Activated T-helper 2 cell treated with anti-CD3 and anti-CD28 coated beads, Interferon-gamma antibody, Interleukin-2, Interleukin-4, amounts not matched to agents 10 μg/mL and 5 μg/mL and 100 μg/mL, durations not matched to agents 14 hours and 24 hours and 36 hours (primary cell): ENCODE measurements at regions of chr1 and their contacts with region 1.

Region 1: DNA sequence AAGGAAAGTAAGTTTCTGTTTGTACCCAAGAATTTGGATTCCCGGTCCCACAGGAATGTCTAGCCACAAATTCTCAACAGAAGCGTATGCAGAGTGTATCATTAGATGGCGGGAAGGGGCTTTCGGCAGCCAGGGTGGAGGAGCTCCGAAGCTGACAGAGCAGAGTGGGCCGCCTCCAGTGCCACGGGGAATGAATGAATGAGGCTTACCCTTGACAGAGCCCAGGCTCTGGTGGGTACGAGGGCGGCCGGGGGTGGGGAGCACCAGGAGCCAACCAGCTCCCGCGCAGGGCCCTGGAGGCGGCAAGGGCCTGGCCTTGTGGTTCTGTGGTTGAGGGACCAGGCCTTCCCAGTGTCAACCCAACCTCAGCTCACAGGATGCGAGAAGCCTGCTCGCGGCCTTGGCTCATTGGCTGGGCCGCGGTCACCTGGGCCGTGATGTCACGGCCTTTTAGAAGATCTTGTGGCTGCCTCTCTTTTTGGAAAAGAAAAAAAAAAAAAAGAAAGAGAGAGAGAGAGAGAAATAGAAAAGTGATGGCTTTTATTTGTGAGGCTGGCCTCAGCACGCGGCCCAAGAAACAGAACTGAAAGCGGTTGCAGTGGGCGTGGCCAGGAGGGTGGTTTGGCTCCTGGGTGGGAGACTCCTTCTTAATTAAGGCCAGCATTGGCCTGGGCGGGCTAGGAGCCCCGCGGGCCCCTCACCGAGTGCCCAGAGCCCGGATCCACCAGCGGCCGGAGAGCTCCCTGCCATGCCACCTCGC is 34.9 kb upstream of the RUNX3 start:
- DNase-seq: peak; percentile 94
- H3K4me3 Mint-ChIP-seq: peak overlapping the region; percentile 94
- H3K27ac Mint-ChIP-seq: peak overlapping the region; percentile 99
- H3K4me1 Mint-ChIP-seq: peaks cover 68% of the 10 kb centered on the region
- H3K27me3 Mint-ChIP-seq: no peaks in the 10 kb centered on the region

Region 2: DNA sequence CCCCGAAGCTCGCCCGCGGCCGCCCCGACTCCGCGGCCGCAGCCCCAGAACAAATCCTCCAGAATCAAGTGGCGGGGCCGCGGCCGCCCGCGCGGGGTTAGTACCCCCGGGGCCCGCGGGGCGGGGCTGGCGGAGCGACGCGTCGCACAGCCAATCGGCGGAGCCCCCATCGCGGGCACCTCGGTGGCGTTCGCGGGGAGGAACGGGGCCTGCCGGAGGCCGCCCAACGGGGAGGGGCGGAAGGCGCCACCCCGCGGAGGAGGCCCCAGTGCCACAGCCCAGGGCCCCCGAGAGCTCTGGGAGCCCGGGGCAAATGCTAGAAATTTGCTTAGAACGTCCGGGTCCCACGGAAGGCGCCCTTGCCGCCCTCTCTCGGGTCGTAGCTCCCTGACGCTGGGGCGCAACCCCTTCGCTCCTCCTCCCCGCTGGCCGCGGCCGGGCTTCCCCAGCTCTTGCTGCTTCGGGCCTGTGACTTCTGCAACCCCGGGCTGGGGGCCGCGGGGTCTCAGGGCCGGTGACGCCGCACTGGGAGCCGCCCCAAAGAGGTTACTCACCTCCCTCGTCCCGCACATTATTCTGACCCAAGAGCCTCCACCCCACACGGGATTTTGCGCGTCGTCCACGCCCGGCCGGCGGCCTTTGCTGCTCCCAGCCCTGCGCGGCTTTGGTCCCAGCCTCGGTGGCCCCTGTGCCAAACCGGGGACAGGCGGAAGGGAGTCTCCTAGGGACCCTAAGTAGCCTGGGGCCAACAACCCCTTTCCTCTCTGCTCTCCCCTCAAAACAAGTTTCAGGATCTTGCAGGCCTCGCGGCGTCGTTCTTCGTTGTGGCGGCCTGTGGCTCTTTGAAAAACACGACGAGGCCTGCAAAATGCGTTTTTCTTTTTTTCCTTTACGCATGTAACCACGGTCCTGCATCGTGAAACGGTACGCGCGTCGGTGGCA is 34.5 kb before region 1 on chr1 and contains the start of gene RUNX3:
- intact Hi-C with region 1: loop called (anchors 1 kb)
- DNase-seq: peak; percentile 88
- H3K4me3 Mint-ChIP-seq: peak within 1 kb of the TSS; percentile 93
- H3K27ac Mint-ChIP-seq: peak within 1 kb of the TSS; percentile 67
- H3K4me1 Mint-ChIP-seq: peaks cover 61% of the 10 kb centered on the region
- H3K27me3 Mint-ChIP-seq: no peaks in the 10 kb centered on the region
- total RNA-seq, gene RUNX3: 129 and 135 TPM in 2 replicates

Region 3: DNA sequence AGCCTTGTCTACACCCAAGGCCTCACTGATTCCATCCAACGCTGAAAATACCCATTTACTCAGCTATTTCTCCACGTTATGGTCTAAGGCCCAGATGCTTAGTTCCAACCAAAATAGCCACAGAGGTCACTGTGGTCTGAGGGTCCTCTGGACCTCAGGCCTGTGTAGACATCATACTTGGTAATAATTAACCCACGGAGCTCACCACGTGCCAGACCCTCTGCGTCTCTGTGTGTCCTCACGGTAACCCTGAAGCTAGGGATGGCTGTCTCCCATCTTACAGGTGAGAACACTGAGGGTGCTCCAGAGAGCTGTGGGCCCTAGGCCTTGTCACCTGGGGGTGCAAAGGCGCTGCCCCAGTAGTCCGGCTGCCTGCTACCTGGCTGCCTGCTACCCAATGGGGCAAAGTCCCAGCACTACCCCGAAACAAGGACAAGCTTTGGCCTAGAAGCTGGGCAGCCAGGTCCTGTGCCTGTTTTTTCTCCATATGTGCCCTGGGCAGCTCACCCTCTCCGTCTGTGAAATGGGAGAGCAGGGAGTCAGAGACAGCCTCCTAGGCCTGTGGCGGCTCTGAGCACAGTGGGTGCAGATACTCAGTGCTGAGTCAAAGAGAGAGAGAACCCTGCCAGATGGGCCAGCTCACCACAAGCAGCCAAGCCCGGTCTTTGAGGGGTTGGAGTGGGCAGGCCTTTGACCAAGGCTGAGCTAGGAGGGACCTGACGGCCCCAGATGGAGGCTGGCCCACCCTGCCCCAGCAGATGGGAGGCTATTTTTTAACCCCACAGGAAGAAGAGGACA is 17.9 kb before region 1 on chr1:
- intact Hi-C with region 1: no loop called
- DNase-seq: no peak
- H3K4me3 Mint-ChIP-seq: no peak overlapping the region
- H3K27ac Mint-ChIP-seq: peak overlapping the region; percentile 62
- H3K4me1 Mint-ChIP-seq: peaks cover 53% of the 10 kb centered on the region
- H3K27me3 Mint-ChIP-seq: no peaks in the 10 kb centered on the region

Region 4: DNA sequence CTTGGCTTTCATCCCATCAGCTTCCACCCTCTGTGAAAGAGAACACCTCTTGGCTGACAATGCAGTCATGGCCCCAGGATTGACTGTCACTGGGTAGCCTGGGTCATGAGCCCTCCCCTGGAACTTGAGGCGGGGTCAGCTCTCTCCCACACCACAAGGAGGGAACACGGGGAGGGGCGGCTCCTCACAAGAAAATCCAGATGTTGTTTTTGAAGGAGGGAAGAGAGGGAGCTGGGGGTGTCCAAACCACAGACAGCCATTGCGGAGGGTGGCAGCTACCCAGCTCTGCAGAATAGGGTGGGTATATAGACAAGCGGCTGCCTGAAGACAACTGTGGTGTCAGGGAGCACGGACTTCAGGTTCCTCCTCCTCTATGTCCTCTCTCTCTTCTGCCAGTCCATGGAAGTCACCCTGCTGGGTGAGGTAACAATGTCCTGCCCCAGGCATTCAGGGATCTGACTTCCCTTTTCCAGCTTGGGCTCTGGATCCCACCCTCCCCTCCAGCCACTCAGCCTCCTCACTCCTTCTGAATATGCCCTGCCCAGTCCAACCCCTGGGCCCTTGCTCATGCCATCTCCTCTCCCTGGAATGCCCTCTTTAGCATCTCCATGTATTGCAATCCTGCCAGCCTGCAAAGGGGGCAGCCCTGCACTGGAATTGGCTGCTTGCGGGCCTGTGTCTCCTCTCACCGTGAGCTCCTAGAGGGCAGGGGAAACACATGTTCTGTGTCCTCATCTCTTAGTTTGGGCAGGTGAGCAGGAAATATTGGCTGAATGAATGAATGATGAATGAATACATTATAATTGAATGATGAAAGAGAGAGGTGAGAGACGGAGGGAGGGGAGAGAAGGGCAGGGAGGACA is 26.0 kb after region 1 on chr1:
- intact Hi-C with region 1: loop called (anchors 2 kb)
- DNase-seq: no peak
- H3K4me3 Mint-ChIP-seq: no peak overlapping the region
- H3K27ac Mint-ChIP-seq: peak overlapping the region; percentile 15
- H3K4me1 Mint-ChIP-seq: peaks cover 62% of the 10 kb centered on the region
- H3K27me3 Mint-ChIP-seq: peaks cover 2% of the 10 kb centered on the region

Region 5: GRCh38 chr1:25022361-25023189 is 57.6 kb after region 1 on chr1:
- intact Hi-C with region 1: loop called (anchors 1 kb)
- DNase-seq: peak; percentile 91
- H3K4me3 Mint-ChIP-seq: peak overlapping the region; percentile 76
- H3K27ac Mint-ChIP-seq: peak overlapping the region; percentile 96
- H3K4me1 Mint-ChIP-seq: peaks cover 87% of the 10 kb centered on the region
- H3K27me3 Mint-ChIP-seq: no peaks in the 10 kb centered on the region

Region 6: DNA sequence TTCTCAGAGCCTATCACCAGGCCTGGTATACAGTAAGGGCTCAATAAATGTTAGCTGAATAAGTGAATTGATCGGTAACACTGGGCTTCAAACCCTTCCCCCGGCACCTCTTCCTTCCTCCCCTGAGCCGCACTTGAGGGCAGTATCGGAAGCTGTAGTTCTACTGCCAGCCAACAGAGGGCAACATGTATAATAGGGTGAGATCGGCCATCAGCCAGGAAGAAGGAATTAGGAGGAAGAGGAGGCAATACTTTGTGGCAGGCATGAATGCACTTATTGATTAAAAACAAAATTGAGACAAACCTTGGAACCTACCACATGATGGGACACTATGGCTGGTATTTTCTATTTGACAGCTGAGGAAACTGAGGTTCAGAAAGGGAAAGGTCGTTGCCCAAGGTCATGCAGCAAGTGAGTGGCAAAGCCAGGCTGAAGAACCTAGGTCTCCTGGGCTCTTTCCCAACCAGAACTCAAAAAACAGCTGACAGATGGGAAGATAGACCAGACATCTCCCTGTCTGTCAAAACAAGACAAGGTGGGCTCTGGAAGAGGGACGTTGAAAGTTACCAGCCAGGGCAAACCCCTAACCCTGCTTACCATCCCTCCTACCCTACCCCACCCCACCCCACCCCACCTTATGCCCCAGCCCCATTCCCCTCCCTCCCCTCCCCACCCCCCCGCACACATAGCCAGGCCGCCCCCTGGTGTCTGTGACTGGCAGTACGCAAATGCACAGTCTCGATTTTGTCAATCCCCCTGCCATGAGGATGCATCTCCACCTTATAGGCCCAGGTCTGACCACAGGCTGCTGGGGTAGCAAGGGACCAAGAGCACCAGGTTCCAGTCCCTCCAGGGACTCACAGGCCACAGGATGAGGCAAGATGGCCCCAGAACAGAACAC is 72.4 kb after region 1 on chr1:
- intact Hi-C with region 1: loop called (anchors 1 kb)
- DNase-seq: peak; percentile 43
- H3K4me3 Mint-ChIP-seq: no peak overlapping the region
- H3K27ac Mint-ChIP-seq: peak overlapping the region; percentile 0
- H3K4me1 Mint-ChIP-seq: peaks cover 36% of the 10 kb centered on the region
- H3K27me3 Mint-ChIP-seq: peaks cover 10% of the 10 kb centered on the region

Region 7: GRCh38 chr1:25065795-25066238 is 100.8 kb after region 1 on chr1:
- intact Hi-C with region 1: no loop called
- DNase-seq: no peak
- H3K4me3 Mint-ChIP-seq: no peak overlapping the region
- H3K27ac Mint-ChIP-seq: no peak overlapping the region
- H3K4me1 Mint-ChIP-seq: peaks cover 10% of the 10 kb centered on the region
- H3K27me3 Mint-ChIP-seq: peaks cover 10% of the 10 kb centered on the region